Activated CD4-positive, alpha-beta memory T cell treated with anti-CD3 and anti-CD28 coated beads, Interleukin-2, amount 10 ng/mL, durations not matched to agents 7 days and 5 days (primary cell): ENCODE measurements at regions of chr2 and their contacts with region 1.

Region 1: DNA sequence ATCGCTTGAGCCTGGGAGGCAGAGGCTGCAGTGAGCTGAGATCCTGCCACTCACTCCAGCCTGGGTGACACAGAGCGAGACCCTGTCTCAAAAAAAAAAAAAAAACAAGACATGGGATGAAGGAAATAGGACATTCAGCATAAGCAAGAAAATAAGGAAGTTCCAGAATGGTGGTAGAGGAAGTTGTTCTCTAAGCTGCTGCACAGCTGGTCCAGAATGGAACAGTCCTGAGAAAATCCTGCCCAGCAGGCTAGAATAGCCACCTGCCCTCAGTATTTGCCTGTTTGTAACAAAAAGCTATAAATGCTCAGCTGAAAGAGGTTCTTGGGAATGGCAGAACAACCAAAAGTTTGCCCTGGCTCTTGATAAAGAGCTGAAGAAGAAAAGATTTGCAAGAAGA is 11.1 kb upstream of the MAPRE3 start:
- DNase-seq: no peak
- H3K4me3 Mint-ChIP-seq: no peak overlapping the region
- H3K27ac Mint-ChIP-seq: no peak overlapping the region
- H3K4me1 Mint-ChIP-seq: no peaks in the 10 kb centered on the region
- H3K27me3 Mint-ChIP-seq: peaks cover 40% of the 10 kb centered on the region

Region 2: GRCh38 chr2:26911911-26912861 is 47.1 kb before region 1 on chr2:
- CTCF ChIA-PET with region 1: no interaction called
- POLR2A ChIA-PET with region 1: no interaction called
- DNase-seq: no peak
- H3K4me3 Mint-ChIP-seq: no peak overlapping the region
- H3K27ac Mint-ChIP-seq: no peak overlapping the region
- H3K4me1 Mint-ChIP-seq: no peaks in the 10 kb centered on the region
- H3K27me3 Mint-ChIP-seq: peaks cover 19% of the 10 kb centered on the region

Region 3: GRCh38 chr2:27016801-27017325 is 57.5 kb after region 1 on chr2:
- CTCF ChIA-PET with region 1: interaction called, 115 read pairs
- POLR2A ChIA-PET with region 1: interaction called, 7 read pairs
- DNase-seq: peak; percentile 46
- H3K4me3 Mint-ChIP-seq: no peak overlapping the region
- H3K27ac Mint-ChIP-seq: no peak overlapping the region
- H3K4me1 Mint-ChIP-seq: peaks cover 5% of the 10 kb centered on the region
- H3K27me3 Mint-ChIP-seq: no peaks in the 10 kb centered on the region